ENCODE measurements at regions of chr5 and their contacts with region 1.

Region 1: GRCh38 chr5:39217365-39218281 is 1.7 kb downstream of the FYB1 start:
- DNase-seq: no peak
- ATAC-seq: peak; percentile 77
- H3K4me3 Mint-ChIP-seq: no peak overlapping the region
- H3K27ac Mint-ChIP-seq: no peak overlapping the region
- H3K4me1 Mint-ChIP-seq: no peaks in the 10 kb centered on the region
- H3K27me3 Mint-ChIP-seq: peaks cover 5% of the 10 kb centered on the region
- CTCF ChIP-seq: peak; percentile 86

Region 2: GRCh38 chr5:38497946-38498345 is 719.7 kb before region 1 on chr5:
- CTCF ChIA-PET with region 1: no interaction called
- POLR2A ChIA-PET with region 1: no interaction called
- intact Hi-C with region 1: no loop called
- DNase-seq: no peak
- ATAC-seq: no peak
- H3K4me3 Mint-ChIP-seq: no peak overlapping the region
- H3K27ac Mint-ChIP-seq: no peak overlapping the region
- H3K4me1 Mint-ChIP-seq: no peaks in the 10 kb centered on the region
- H3K27me3 Mint-ChIP-seq: peaks cover 17% of the 10 kb centered on the region
- CTCF ChIP-seq: no peak

Region 3: DNA sequence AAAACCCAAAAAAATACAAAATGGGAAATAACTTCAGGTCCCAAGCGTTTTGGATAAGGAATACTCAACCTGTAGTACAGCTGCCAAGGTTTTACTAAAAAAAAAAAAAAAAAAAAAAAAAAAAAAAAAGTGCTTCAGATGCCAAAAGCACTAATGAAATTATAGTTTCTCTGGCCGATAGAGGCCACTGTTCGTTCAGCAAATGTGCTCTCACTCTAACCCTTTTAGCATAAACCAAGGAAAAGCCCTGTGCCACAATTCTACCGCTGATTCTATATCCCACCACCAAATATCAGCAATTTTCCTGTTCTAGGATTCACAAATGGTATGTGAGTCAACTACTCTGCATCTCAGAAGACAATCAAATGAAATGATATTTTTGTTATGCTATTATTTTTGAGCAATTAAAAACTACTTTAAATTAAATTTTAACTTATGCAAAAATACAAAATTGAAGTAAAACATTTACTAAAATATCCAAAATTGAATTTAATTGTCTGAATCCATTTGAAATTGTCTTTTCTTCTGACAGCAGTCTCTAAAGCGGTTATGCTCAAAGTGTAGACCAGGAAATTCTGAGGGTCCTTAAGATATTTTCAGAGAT is 223.2 kb before region 1 on chr5:
- CTCF ChIA-PET with region 1: interaction called, 4 read pairs
- POLR2A ChIA-PET with region 1: no interaction called
- intact Hi-C with region 1: loop called (anchors 10 kb)
- DNase-seq: no peak
- ATAC-seq: no peak
- H3K4me3 Mint-ChIP-seq: no peak overlapping the region
- H3K27ac Mint-ChIP-seq: no peak overlapping the region
- H3K4me1 Mint-ChIP-seq: peaks cover 4% of the 10 kb centered on the region
- H3K27me3 Mint-ChIP-seq: no peaks in the 10 kb centered on the region
- CTCF ChIP-seq: no peak

Region 4: GRCh38 chr5:39231705-39232525 is 14.3 kb after region 1 on chr5:
- CTCF ChIA-PET with region 1: interaction called, 12 read pairs
- POLR2A ChIA-PET with region 1: no interaction called
- intact Hi-C with region 1: no loop called
- DNase-seq: no peak
- ATAC-seq: no peak
- H3K4me3 Mint-ChIP-seq: no peak overlapping the region
- H3K27ac Mint-ChIP-seq: no peak overlapping the region
- H3K4me1 Mint-ChIP-seq: no peaks in the 10 kb centered on the region
- H3K27me3 Mint-ChIP-seq: peaks cover 2% of the 10 kb centered on the region
- CTCF ChIP-seq: no peak

Region 5: GRCh38 chr5:39283231-39283818 is 65.7 kb after region 1 on chr5:
- CTCF ChIA-PET with region 1: interaction called, 90 read pairs
- POLR2A ChIA-PET with region 1: no interaction called
- intact Hi-C with region 1: loop called (anchors 1 kb)
- DNase-seq: no peak
- ATAC-seq: peak; percentile 75
- H3K4me3 Mint-ChIP-seq: no peak overlapping the region
- H3K27ac Mint-ChIP-seq: no peak overlapping the region
- H3K4me1 Mint-ChIP-seq: peaks cover 2% of the 10 kb centered on the region
- H3K27me3 Mint-ChIP-seq: peaks cover 15% of the 10 kb centered on the region
- CTCF ChIP-seq: peak; percentile 38

Region 6: DNA sequence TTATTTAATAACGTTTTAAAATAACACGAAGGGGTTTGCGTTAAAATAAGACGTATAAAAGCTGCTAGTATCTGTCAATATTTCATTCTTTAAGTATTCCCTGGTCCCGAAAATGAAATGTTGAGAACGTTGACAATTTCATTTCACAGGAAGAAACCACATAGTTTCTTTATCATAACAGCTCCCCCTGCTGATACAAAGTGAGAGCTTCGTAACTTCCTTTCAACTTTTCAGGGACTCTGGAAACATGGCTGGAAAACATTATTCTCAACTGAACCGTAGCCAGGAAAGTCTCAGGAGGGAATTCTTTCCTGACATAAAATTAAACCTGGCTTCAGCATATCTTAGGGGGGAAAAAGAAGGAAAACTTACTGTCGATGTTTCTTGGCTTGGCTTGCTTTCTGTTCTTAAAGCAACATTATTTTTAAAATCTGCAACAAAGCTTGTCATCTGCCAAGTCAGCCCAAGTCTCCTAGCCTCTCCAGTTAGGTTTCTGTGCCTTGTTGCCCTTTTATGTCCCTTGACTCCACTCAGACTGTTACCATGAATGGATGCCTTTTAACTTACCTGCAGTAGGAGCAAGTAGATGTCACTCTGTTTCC is 330.0 kb after region 1 on chr5:
- CTCF ChIA-PET with region 1: interaction called, 41 read pairs
- POLR2A ChIA-PET with region 1: no interaction called
- intact Hi-C with region 1: loop called (anchors 1 kb)
- DNase-seq: no peak
- ATAC-seq: no peak
- H3K4me3 Mint-ChIP-seq: no peak overlapping the region
- H3K27ac Mint-ChIP-seq: no peak overlapping the region
- H3K4me1 Mint-ChIP-seq: peaks cover 1% of the 10 kb centered on the region
- H3K27me3 Mint-ChIP-seq: peaks cover 11% of the 10 kb centered on the region
- CTCF ChIP-seq: no peak